PC-3 (cell line): ENCODE measurements at regions of chr14 and their contacts with region 1.

Region 1: GRCh38 chr14:21383848-21384493 is at the start of gene SUPT16H:
- DNase-seq: peak; percentile 95
- ATAC-seq: peak; percentile 90
- H3K4me3 ChIP-seq: peak within 1 kb of the TSS; percentile 80
- H3K27ac ChIP-seq: peak within 1 kb of the TSS; percentile 86
- H3K4me1 ChIP-seq: peaks cover 14% of the 10 kb centered on the region
- H3K27me3 ChIP-seq: no peaks in the 10 kb centered on the region
- CTCF ChIP-seq: no peak
- total RNA-seq, gene SUPT16H: 92.6 and 102 TPM in 2 replicates

Region 2: GRCh38 chr14:21419528-21419927 is 35.6 kb after region 1 on chr14:
- CTCF ChIA-PET with region 1: no interaction called
- POLR2A ChIA-PET with region 1: interaction called, 13 read pairs
- intact Hi-C with region 1: no loop called
- DNase-seq: no peak
- ATAC-seq: no peak
- H3K4me3 ChIP-seq: no peak overlapping the region
- H3K27ac ChIP-seq: no peak overlapping the region
- H3K4me1 ChIP-seq: no peaks in the 10 kb centered on the region
- H3K27me3 ChIP-seq: no peaks in the 10 kb centered on the region
- CTCF ChIP-seq: no peak